Activated naive CD4-positive, alpha-beta T cell treated with anti-CD3 and anti-CD28 coated beads for 36 hours (primary cell): ENCODE measurements at regions of chr7 and their contacts with region 1.

Region 1: GRCh38 chr7:102464577-102465280 is at the starts of genes ALKBH4 and LRWD1:
- DNase-seq: peak; percentile 94
- H3K4me3 Mint-ChIP-seq: peak within 1 kb of the TSS; percentile 91
- H3K27ac Mint-ChIP-seq: peak within 1 kb of the TSS; percentile 63
- H3K4me1 Mint-ChIP-seq: peaks cover 27% of the 10 kb centered on the region
- H3K27me3 Mint-ChIP-seq: no peaks in the 10 kb centered on the region
- total RNA-seq, gene ALKBH4: 5.7 to 6.4 TPM
- total RNA-seq, gene LRWD1: 9.4 to 11.0 TPM

Region 2: GRCh38 chr7:102286237-102287110 is 178.3 kb before region 1 on chr7 and contains the start of gene SH2B2:
- CTCF ChIA-PET with region 1: interaction called, 4 read pairs
- intact Hi-C with region 1: loop called (anchors 1 kb)
- DNase-seq: peak; percentile 56
- H3K4me3 Mint-ChIP-seq: peak within 1 kb of the TSS; percentile 64
- H3K27ac Mint-ChIP-seq: no peak within 1 kb of the TSS
- H3K4me1 Mint-ChIP-seq: peaks cover 28% of the 10 kb centered on the region
- H3K27me3 Mint-ChIP-seq: peaks cover 10% of the 10 kb centered on the region
- total RNA-seq, gene SH2B2: 1.4 TPM

Region 3: DNA sequence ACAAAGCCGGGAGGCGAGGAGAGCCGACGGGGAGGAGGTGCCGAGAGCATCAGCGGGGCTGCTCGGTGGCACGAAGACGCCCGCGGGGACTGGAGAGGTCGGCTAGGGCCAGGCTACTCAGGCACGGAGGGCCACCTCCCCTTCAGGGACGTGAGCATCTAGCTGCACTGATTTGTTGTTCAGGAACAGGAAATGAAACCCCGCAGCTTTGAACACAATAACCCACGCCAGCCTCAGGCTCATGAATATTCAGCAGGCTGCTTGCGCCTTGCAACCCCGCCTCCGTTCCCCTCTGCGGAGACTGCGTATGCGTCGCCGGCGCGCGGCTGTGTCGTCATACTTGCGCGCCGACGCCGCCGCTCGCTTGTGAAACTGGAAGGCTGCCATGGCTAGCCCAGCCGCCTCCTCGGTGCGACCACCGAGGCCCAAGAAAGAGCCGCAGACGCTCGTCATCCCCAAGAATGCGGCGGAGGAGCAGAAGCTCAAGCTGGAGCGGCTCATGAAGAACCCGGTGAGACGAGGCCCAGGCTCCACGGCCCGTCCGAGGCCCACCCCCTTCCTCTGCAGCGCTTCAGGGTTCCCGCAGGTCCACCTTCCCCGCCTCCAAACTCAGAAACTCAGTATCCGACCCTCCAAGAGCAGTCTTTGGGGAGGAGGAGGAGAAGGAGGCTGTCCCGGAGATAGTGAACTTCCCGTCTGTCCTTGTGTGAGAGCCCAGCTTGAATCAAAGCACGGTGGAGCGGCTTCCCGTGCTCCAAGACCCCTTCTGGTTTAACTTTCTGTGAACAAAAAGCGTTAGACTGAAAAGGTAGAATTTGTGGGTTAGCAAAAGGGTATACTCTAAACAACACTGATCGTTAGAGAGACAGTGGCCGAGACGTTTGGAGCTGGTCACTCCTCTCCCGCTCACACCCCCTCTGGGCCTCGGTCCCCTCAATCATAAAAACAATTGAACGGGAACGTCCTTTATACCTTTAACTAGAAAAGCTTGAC is 68.4 kb before region 1 on chr7 and contains the start of gene PRKRIP1:
- CTCF ChIA-PET with region 1: interaction called, 6 read pairs
- intact Hi-C with region 1: loop called (anchors 2 kb)
- DNase-seq: peak; percentile 91
- H3K4me3 Mint-ChIP-seq: peak within 1 kb of the TSS; percentile 91
- H3K27ac Mint-ChIP-seq: peak within 1 kb of the TSS; percentile 88
- H3K4me1 Mint-ChIP-seq: peaks cover 19% of the 10 kb centered on the region
- H3K27me3 Mint-ChIP-seq: no peaks in the 10 kb centered on the region
- total RNA-seq, gene PRKRIP1: 17.8 to 18.5 TPM

Region 4: DNA sequence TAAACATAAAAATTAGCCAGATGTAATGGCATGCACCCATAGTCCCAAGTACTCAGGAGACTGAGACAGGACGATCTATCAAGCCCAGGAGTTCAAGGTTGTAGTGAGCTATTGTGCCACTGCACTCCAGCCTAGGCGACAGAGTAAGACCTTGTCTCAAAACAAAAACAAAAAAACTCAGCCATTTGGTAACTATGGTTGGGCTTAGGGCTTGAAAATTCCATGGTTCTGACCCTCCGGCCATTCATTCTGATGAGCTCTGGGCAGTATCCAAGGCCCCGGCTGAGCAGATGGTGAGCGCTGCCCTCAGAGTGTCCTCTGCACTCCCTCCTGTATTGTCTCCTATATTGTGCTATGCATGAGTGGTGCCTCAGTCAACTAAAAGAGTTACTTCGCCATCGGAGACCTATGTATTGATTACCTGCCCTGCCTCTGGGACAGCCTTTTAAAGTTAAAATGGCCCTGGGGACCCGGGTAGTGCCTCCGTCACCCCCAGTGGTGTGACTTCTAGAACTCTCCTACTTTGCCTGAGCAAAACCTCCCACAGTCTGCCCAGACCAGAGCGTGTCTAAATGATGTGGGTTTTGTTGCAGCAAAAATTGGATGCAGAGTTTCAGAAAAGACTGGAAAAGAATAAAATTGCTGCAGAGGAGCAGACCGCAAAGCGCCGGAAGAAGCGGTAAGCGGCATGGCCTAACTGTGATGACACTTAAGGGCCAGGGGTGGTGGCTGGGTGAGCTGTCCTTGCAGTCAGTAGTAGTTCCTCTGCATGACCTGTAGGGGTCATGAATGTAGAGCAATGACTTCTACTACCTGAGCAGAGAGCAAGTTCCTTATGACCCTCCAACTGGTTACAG is 60.5 kb before region 1 on chr7:
- CTCF ChIA-PET with region 1: interaction called, 15 read pairs
- intact Hi-C with region 1: loop called (anchors 1 kb)
- DNase-seq: peak; percentile 51
- H3K4me3 Mint-ChIP-seq: no peak overlapping the region
- H3K27ac Mint-ChIP-seq: no peak overlapping the region
- H3K4me1 Mint-ChIP-seq: peaks cover 4% of the 10 kb centered on the region
- H3K27me3 Mint-ChIP-seq: no peaks in the 10 kb centered on the region

Region 5: GRCh38 chr7:102412548-102412947 is 52.2 kb before region 1 on chr7:
- CTCF ChIA-PET with region 1: interaction called, 25 read pairs
- intact Hi-C with region 1: loop called (anchors 1 kb)
- DNase-seq: peak; percentile 65
- H3K4me3 Mint-ChIP-seq: no peak overlapping the region
- H3K27ac Mint-ChIP-seq: no peak overlapping the region
- H3K4me1 Mint-ChIP-seq: peaks cover 40% of the 10 kb centered on the region
- H3K27me3 Mint-ChIP-seq: no peaks in the 10 kb centered on the region

Region 6: DNA sequence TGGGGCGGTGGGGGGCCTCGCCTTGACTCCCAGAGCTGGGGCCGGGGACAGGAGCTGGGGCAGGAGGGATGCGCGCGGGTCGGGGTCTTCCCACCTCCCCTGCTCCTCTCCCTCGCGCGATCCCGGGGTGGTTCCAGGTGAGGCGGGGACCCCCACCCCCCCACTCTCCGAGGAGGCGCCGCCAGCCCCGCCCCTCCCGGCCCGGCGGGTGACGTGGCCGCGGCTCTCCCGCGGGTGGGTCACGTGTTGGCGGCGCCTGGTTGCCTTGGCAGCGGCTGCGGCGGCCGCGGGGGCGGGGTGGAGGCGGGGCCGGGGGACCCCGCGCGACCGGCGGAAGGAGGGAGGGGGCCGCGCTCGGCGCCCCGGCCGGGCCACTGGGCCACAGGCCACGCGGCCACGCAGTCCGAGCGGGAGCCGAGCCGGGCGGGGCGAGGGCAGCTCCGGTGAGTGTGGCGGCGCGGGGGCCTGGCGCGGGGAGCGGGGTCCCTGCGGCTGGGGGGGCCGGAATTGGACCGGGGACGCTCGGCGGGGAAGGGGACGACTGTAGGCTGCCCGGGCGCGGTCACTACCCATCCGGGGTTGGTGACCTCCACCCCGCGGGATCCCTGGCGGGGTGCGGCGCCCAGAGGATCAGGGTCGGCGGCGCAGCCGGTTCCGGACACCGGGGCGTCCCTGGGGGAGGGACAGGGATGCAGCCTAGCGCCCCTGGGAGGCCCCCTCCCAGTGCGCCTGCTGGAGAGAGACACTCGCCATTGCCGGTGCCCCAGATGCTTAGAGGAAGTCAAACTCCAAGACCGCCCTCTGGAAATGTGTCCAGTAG is 31.3 kb before region 1 on chr7 and contains the start of gene ORAI2:
- CTCF ChIA-PET with region 1: interaction called, 17 read pairs
- intact Hi-C with region 1: loop called (anchors 1 kb)
- DNase-seq: peak; percentile 81
- H3K4me3 Mint-ChIP-seq: peak within 1 kb of the TSS; percentile 79
- H3K27ac Mint-ChIP-seq: peak within 1 kb of the TSS; percentile 98
- H3K4me1 Mint-ChIP-seq: peaks cover 49% of the 10 kb centered on the region
- H3K27me3 Mint-ChIP-seq: no peaks in the 10 kb centered on the region
- total RNA-seq, gene ORAI2: 15.4 to 16.4 TPM